Activated naive CD8-positive, alpha-beta T cell treated with anti-CD3 and anti-CD28 coated beads, Interleukin-2, amount 10 ng/mL, durations not matched to agents 7 days and 5 days (primary cell): ENCODE measurements at regions of chr1 and their contacts with region 1.

Region 1: GRCh38 chr1:70354332-70355110 is at the start of gene ANKRD13C:
- DNase-seq: peak; percentile 90
- ATAC-seq: peak; percentile 90
- H3K4me3 Mint-ChIP-seq: peak within 1 kb of the TSS; percentile 93
- H3K27ac Mint-ChIP-seq: peak within 1 kb of the TSS; percentile 97
- H3K4me1 Mint-ChIP-seq: peaks cover 30% of the 10 kb centered on the region
- H3K27me3 Mint-ChIP-seq: no peaks in the 10 kb centered on the region
- total RNA-seq, gene ANKRD13C: 25.9 to 28.1 TPM

Region 2: DNA sequence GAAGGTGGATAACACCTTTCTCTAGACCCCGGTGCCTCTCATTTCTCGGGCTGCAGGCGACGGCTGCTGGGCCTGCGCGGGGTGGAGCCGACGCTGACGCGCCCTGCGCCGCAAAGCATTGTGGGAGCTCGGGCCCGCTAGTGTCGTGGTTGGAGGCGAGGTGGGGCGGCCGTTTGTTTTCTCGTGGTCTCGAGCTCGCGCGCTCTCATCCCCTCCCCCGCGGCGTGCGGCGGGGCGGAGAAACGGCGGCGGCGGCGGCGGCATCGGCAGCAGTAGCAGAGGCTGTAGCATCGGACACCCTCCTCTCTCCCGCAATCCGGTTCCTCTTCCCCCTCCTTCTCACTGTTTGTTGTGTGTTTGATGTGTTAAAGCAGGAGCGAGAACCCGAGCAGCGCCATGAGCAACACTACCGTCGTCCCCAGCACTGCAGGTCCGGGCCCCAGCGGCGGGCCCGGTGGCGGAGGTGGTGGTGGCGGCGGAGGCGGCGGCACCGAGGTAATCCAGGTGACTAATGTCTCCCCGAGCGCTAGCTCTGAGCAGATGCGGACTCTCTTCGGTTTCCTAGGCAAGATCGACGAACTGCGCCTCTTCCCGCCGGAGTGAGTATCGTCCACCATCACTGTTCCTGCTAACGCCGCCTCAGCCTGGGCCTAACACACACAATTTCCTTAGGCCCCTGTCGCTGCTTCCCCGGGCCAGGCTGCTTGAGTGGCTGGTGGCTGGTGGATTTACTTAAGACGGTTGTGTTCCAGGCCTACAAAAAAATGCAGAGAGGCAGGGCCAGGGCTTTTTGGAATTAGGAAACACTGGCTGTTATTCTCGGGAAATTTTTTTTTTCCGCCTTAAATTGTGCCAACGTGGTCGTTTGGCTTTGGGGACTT is 133.0 kb before region 1 on chr1 and contains the start of gene SRSF11:
- POLR2A ChIA-PET with region 1: interaction called, 16 read pairs
- DNase-seq: peak; percentile 97
- ATAC-seq: peak; percentile 95
- H3K4me3 Mint-ChIP-seq: peak within 1 kb of the TSS; percentile 90
- H3K27ac Mint-ChIP-seq: peak within 1 kb of the TSS; percentile 96
- H3K4me1 Mint-ChIP-seq: peaks cover 36% of the 10 kb centered on the region
- H3K27me3 Mint-ChIP-seq: no peaks in the 10 kb centered on the region
- total RNA-seq, gene SRSF11: 242 to 252 TPM

Region 3: DNA sequence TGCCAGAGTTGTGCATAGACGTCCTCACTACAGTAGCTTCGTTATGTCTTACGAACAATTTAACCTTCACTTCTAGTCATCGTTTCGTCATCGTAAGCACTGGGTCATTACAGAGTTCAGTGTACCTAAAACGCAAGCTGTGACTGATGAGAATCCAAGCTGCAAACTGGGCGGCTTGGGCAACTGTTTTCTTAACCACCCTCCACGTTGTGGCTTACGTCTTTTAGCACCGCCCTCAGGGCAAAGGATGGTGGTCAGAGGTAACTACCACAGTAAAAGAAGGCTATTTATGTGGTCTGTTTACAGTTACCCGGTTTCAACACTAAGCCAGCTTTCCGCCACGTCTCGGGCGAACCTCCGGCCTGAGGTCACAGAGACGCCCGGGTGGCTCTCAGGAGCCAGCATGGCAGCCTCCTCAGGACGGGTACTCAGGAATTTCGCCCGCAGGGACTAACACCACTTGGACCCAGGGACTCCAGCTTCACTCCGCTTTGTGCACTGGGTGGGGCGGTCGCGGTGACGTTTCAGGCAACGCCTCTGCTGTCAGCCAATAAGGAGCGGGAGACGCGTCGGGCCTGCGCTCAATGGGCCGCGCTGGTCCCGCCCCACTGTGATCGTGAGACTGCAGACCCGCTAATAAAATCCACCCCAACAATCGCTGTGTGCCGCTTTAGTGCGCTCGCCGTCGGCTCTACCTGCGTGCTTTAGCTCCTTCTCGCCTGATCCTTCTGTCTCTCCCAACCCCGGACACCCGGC is 56.3 kb after region 1 on chr1 and contains the start of gene CTH:
- POLR2A ChIA-PET with region 1: interaction called, 64 read pairs
- DNase-seq: peak; percentile 91
- ATAC-seq: peak; percentile 98
- H3K4me3 Mint-ChIP-seq: peak within 1 kb of the TSS; percentile 98
- H3K27ac Mint-ChIP-seq: peak within 1 kb of the TSS; percentile 93
- H3K4me1 Mint-ChIP-seq: peaks cover 6% of the 10 kb centered on the region
- H3K27me3 Mint-ChIP-seq: peaks cover 23% of the 10 kb centered on the region
- total RNA-seq, gene CTH: 2.3 to 2.7 TPM